ENCODE measurements at regions of chr12 and their contacts with region 1.

Region 1: GRCh38 chr12:65169320-65170208 is at the start of gene LEMD3:
- DNase-seq: peak; percentile 46
- ATAC-seq: peak; percentile 98
- H3K4me3 ChIP-seq: peak within 1 kb of the TSS; percentile 81 to 82
- H3K27ac ChIP-seq: peak within 1 kb of the TSS; percentile 83
- H3K4me1 ChIP-seq: peaks cover 13% of the 10 kb centered on the region
- H3K27me3 ChIP-seq: no peaks in the 10 kb centered on the region
- CTCF ChIP-seq: no peak
- total RNA-seq, gene LEMD3: 26.9 TPM

Region 2: GRCh38 chr12:64304571-64304970 is 865.0 kb before region 1 on chr12:
- CTCF ChIA-PET with region 1: no interaction called
- POLR2A ChIA-PET with region 1: interaction called, 10 read pairs
- in situ Hi-C with region 1: no loop called
- intact Hi-C with region 1: no loop called
- DNase-seq: no peak
- ATAC-seq: no peak
- H3K4me3 ChIP-seq: no peak overlapping the region
- H3K27ac ChIP-seq: no peak overlapping the region
- H3K4me1 ChIP-seq: no peaks in the 10 kb centered on the region
- H3K27me3 ChIP-seq: no peaks in the 10 kb centered on the region
- CTCF ChIP-seq: no peak

Region 3: GRCh38 chr12:65269603-65270002 is 100.0 kb after region 1 on chr12:
- CTCF ChIA-PET with region 1: interaction called, 13 read pairs
- POLR2A ChIA-PET with region 1: no interaction called
- in situ Hi-C with region 1: no loop called
- intact Hi-C with region 1: no loop called
- DNase-seq: no peak
- ATAC-seq: no peak
- H3K4me3 ChIP-seq: no peak overlapping the region
- H3K27ac ChIP-seq: no peak overlapping the region
- H3K4me1 ChIP-seq: no peaks in the 10 kb centered on the region
- H3K27me3 ChIP-seq: no peaks in the 10 kb centered on the region
- CTCF ChIP-seq: no peak

Region 4: GRCh38 chr12:66301944-66302826 is 1132.6 kb after region 1 on chr12 and contains the start of gene HELB:
- CTCF ChIA-PET with region 1: no interaction called
- POLR2A ChIA-PET with region 1: interaction called, 11 read pairs
- in situ Hi-C with region 1: no loop called
- intact Hi-C with region 1: no loop called
- DNase-seq: peak; percentile 76
- ATAC-seq: peak; percentile 99
- H3K4me3 ChIP-seq: peak within 1 kb of the TSS; percentile 87 to 89
- H3K27ac ChIP-seq: peak within 1 kb of the TSS; percentile 86
- H3K4me1 ChIP-seq: peaks cover 9% of the 10 kb centered on the region
- H3K27me3 ChIP-seq: peaks cover 2% of the 10 kb centered on the region; the same call in 1 of the 2 replicates
- CTCF ChIP-seq: no peak
- total RNA-seq, gene HELB: 4.9 TPM

Measured in Panc1 (cell line).